PC-9 (cell line): ENCODE measurements at regions of chr17 and their contacts with region 1.

Region 1: DNA sequence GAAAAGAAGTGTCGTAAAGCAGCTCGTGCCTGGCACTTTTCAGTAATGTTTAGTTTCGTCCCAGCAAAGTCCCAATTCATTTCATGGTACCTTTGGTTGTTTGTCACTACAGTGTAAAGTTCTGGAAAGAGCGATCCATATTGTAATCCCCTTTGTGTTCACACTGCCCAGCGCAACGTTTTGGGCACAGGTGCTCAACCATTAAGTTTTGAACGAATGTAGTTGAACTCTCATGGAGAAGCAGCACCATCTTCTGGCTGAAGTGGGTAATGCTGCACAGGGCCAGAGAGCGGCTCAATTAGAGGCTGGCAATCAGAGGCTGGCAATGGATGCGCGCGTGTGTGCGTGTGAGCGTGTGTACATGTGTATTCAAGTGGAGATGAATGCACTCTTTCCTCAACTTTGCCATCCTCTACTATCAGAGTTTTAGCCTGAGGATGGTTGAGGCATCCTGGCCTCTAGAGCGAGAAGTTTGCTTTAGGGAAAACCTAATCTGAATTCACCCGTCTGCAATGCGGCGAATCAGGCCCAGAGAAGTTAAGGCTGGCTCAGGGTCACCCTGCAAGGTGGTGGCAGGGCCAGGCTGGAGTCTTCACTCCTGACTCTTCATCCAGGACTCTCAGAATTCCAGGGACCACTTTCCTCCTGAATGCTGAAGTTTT is 29.9 kb downstream of the DYNLL2 start:
- DNase-seq: peak; percentile 61 to 74
- H3K4me3 ChIP-seq: no peak overlapping the region
- H3K27ac ChIP-seq: no peak overlapping the region
- H3K4me1 ChIP-seq: no peaks in the 10 kb centered on the region
- H3K27me3 ChIP-seq: peaks cover 16% of the 10 kb centered on the region
- CTCF ChIP-seq: peak; percentile 98

Region 2: DNA sequence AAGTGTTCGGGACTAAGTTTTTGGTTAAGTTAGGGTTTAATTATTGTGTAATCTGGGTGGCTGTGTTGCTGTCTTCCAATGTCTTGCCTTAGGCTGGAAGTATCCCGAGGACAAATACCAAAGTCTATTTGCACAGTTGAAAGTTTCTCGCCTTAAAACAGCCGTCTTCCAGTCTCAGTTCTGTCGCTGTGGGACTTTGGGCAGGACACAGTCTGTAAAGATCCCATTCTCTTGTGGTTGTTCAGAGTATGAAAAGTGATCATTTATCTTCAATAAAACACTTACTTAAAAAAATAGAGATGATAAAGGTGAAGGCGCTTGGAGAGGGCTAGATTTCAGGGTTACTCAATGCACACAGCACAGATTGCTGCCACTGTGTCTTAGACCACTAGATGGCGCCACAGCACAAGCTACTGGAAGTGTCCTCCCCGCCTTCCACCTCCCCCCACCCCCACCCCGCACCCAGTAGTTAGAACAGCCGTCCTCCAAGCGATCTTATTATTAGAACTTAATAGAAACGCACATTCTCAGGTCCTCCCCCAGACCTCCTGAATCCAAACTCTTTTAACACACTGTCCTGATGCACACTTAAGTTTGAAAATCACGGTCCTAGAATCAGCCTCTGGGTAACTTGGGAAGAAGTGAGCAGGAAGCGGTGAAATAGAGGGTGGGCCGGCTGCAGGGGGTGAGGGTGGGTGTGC is 982.2 kb before region 1 on chr17:
- CTCF ChIA-PET with region 1: no interaction called
- POLR2A ChIA-PET with region 1: no interaction called
- intact Hi-C with region 1: loop called (anchors 2 kb)
- DNase-seq: peak; percentile 66 to 67
- H3K4me3 ChIP-seq: no peak overlapping the region; the same call in 1 of the 2 replicates
- H3K27ac ChIP-seq: no peak overlapping the region
- H3K4me1 ChIP-seq: peaks cover 7% of the 10 kb centered on the region
- H3K27me3 ChIP-seq: no peaks in the 10 kb centered on the region
- CTCF ChIP-seq: peak; percentile 96

Region 3: DNA sequence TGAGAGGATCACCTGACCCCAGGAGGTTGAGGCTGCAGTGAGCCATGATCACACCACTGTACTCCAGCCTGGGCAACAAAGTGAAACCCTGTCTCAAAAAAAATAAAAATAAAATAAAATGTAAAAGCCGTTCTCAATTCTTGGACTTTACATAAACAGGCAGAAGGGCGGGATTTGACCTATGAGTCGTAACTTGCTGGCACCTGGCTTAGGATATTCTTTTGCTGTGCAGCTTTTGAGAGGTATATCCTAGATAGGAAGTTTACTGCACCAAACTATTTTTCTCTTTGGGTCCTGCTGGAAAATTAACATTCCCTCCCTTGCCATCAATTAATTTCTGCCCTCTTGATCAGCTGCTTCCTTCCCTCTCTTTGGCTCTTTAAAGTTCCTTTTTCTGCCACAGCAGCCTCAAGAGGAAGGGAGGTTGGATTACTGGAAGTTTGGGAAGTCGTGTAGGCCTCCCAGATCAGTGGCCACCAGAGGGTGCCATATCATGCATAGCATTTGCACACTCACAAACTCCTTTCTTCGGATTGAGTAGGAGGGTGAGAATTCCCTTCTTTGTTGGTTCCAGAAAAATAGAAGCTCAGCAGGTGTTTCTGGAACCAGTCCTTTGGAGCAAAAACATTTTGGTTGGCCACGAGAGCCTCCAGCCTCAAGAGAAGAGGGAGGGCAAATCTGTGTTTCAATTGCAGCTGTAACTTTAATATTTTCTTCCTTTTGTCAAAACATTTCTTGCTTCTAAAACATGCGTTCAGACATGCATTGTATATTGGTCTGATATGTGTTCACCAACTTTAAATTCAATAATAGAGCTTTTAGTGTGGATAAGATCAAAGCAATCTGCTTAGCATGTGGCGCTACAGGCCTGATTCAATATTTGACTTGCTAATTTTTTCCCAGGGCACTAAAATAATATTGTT is 515.3 kb before region 1 on chr17:
- CTCF ChIA-PET with region 1: no interaction called
- POLR2A ChIA-PET with region 1: no interaction called
- intact Hi-C with region 1: loop called (anchors 1 kb)
- DNase-seq: peak; percentile 36 to 48
- H3K4me3 ChIP-seq: no peak overlapping the region
- H3K27ac ChIP-seq: no peak overlapping the region
- H3K4me1 ChIP-seq: no peaks in the 10 kb centered on the region
- H3K27me3 ChIP-seq: 0 out of 2 replicates have a peak, but pooled peaks cover 3% of the 10 kb centered on the region
- CTCF ChIP-seq: peak; percentile 87

Region 4: DNA sequence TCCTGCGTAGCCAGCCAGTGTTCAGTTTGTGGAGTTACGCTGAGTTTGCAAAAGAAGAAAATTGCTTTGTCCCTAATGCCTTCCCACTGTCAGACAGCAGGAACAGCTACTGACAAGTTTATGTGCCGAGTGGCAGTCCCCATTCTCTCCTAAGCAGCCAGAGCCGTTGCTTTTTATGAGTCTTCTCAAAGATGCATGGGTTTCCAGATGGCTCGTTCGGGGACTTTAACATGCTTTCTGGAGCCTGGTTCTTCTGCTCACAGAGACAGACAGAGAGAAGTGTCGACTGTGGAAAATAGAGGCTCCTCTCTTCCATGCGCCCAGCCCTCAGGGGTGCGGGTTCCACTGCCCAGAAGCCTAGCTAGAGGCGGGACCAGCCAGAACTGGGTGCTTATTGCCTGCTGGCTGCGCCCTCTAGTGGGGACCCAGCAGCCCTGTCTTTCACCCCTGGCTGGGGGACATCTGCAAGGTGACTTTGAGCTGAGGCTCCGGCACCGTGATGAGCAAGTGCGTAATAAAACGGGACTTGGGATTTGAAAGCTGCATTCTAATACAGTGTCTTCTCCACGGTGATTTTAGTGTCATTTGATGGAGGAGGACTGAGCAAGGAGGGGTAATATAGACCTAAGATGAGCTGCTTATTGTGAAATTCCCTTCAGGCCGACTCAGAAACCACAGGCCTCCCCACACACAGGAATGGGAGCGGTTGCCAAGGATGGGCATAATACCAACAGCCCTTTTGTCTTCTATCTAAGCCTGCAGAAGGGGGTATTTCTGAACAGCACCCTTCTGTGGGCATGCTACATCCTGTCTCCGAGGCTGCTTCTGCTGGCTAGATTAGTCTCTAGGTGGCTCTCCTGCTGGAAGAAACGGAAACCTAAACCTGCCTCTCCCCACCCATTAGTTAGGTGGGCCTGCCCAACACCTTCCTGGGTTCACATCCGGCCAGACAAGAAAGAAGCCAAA is 441.2 kb before region 1 on chr17:
- CTCF ChIA-PET with region 1: no interaction called
- POLR2A ChIA-PET with region 1: no interaction called
- intact Hi-C with region 1: loop called (anchors 1 kb)
- DNase-seq: peak in 1 of 2 experiments; percentile 44
- H3K4me3 ChIP-seq: no peak overlapping the region
- H3K27ac ChIP-seq: no peak overlapping the region
- H3K4me1 ChIP-seq: no peaks in the 10 kb centered on the region
- H3K27me3 ChIP-seq: peaks cover 3% of the 10 kb centered on the region; the same call in 1 of the 2 replicates
- CTCF ChIP-seq: peak; percentile 91

Region 5: GRCh38 chr17:57833179-57833939 is 279.7 kb before region 1 on chr17:
- CTCF ChIA-PET with region 1: no interaction called
- POLR2A ChIA-PET with region 1: no interaction called
- intact Hi-C with region 1: loop called (anchors 2 kb)
- DNase-seq: peak; percentile 37 to 53
- H3K4me3 ChIP-seq: no peak overlapping the region
- H3K27ac ChIP-seq: no peak overlapping the region
- H3K4me1 ChIP-seq: no peaks in the 10 kb centered on the region
- H3K27me3 ChIP-seq: no peaks in the 10 kb centered on the region
- CTCF ChIP-seq: peak; percentile 97

Region 6: DNA sequence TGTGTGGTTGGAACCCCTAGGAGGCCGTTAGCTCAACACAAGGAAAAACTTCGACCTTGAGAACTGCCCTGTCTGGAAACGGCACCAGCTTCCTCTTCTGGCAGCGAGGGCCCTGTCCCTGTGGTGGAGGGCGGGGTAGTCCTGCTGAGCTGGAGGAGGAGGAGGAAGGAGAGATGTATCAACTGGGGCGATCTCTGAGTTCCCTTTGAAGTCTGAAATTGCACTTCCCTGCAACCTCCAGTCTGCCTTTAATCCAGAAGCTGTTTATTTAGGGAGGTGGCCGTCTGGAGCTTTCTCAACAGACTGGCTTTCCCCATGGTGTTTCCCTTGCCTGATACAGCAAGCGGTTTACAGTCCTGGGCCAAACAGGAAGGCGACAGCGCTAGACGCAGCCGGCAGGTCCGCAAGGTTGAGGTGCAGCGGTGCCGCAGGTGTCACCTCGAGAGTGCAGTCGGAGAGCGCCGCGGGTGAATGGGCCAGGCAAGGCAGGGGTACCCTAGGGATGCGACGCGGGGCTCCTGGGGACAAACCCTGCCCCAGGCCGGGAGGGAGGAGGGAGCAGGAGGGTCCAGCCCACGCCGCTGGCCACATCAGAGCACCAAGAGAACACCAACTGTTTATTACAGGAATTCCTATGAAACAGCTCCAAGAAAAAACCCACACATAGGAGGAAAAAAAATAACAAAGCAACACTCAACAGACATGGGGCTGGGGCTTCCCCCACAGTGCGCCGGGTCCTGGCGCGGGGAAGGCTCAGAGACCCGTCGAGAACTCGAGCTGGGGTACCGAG is 251.9 kb before region 1 on chr17:
- CTCF ChIA-PET with region 1: no interaction called
- POLR2A ChIA-PET with region 1: no interaction called
- intact Hi-C with region 1: loop called (anchors 2 kb)
- DNase-seq: peak; percentile 63 to 89
- H3K4me3 ChIP-seq: peak overlapping the region; percentile 52
- H3K27ac ChIP-seq: no peak overlapping the region
- H3K4me1 ChIP-seq: peaks cover 18% of the 10 kb centered on the region
- H3K27me3 ChIP-seq: no peaks in the 10 kb centered on the region
- CTCF ChIP-seq: no peak

Region 7: DNA sequence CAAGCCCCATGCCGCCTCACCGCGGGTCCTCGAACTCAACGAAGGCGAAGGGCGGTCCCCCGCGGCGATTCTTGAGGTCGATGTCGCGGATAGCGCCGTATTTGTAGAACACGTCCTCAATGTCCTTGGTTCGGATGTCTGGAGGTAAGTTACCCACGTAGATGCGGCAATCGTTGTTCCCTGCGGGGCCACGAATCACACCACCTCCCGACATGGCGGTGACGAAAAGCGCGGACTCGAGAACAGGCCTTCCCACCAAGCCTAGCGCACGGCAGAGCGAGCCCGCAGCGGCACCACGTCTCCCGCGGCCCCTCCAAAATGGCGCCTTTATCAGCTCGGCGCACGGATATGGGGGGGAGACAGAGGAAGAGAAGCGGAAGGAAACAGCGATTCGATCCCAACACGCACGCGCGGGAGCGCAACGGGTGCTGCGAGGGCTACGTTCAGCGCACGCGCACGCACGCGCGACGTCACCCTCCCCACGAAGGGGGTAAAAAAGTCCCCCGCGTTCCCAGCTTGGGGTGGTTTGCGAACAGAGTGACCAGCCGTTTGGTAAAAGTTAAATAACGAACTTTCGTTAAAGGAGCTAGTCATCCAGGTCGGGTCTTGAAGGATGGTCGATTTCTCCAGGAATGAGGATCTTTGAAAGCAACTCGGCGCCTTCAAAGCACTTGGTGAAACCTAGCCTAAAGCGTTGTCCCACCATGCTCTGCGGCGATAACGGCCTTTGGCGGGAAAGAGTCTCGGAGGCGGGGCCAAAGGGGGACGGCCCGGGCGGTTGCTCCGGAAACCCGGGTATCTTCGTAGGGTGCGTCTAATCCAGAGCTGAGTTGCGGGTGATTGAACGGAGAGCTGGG is 105.9 kb before region 1 on chr17 and contains the start of gene SRSF1:
- CTCF ChIA-PET with region 1: no interaction called
- POLR2A ChIA-PET with region 1: no interaction called
- intact Hi-C with region 1: loop called (anchors 1 kb)
- DNase-seq: peak; percentile 95 to 96
- H3K4me3 ChIP-seq: peak within 1 kb of the TSS; percentile 95
- H3K27ac ChIP-seq: peak within 1 kb of the TSS; percentile 95
- H3K4me1 ChIP-seq: peaks cover 38% of the 10 kb centered on the region
- H3K27me3 ChIP-seq: no peaks in the 10 kb centered on the region
- CTCF ChIP-seq: 0 out of 2 replicates have a peak, but pooled peaks have one; percentile 8
- total RNA-seq, gene SRSF1: 210 and 278 TPM in 2 replicates